Upper lobe of right lung (tissue), 1 donor: ENCODE measurements at regions of chr3 and their contacts with region 1.

Region 1: GRCh38 chr3:119891944-119892721 is 110.2 kb downstream of the NR1I2 start:
- DNase-seq: no peak
- ATAC-seq: peak; percentile 89
- H3K4me3 ChIP-seq: no peak overlapping the region
- H3K27ac ChIP-seq: no peak overlapping the region
- H3K4me1 ChIP-seq: no peaks in the 10 kb centered on the region
- H3K27me3 ChIP-seq: no peaks in the 10 kb centered on the region
- CTCF ChIP-seq: peak; percentile 71

Region 2: GRCh38 chr3:119794971-119795612 is 97.0 kb before region 1 on chr3:
- intact Hi-C with region 1: no loop called
- DNase-seq: no peak
- ATAC-seq: peak; percentile 52
- H3K4me3 ChIP-seq: no peak overlapping the region
- H3K27ac ChIP-seq: no peak overlapping the region
- H3K4me1 ChIP-seq: no peaks in the 10 kb centered on the region
- H3K27me3 ChIP-seq: no peaks in the 10 kb centered on the region
- CTCF ChIP-seq: no peak

Region 3: DNA sequence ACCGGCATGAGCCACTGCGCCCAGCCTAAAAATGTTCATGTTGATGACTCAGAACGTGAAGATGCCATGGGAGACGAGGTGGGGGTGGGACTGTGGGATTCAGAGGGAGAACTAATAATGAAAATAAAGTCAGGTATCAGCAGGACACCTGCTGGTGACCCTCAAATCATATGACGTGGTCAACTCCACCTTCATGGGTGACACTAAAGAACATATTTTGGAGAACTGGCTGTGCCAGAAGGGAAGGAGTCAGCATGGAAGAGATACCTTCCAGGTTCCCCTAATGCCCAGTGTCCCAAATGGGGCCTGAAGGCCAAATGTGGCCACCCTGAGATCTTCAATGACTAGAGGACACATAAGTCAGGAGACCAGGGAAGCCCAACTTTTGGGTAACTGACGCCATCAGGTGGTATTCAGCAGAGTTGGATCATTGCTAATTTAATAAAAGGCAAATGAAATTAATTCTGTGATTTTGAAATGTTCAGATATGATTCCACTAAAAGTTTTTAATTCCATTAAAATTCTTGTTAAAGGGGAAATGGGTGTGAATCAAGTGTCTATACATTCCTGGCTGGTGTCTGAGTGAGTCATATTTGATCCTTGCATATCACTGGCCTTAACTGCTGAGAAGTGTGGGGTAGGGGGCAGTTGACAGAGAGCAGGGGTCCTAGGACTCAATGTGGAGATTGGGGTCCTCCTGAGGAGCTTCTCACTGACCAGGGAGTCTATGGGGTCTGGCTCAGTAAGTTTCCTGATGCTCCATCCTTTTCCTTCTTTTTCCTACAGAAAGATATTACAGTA is 290.8 kb after region 1 on chr3:
- intact Hi-C with region 1: loop called (anchors 10 kb)
- DNase-seq: no peak
- ATAC-seq: peak; percentile 74
- H3K4me3 ChIP-seq: no peak overlapping the region
- H3K27ac ChIP-seq: no peak overlapping the region
- H3K4me1 ChIP-seq: peaks cover under 1% of the 10 kb centered on the region
- H3K27me3 ChIP-seq: no peaks in the 10 kb centered on the region
- CTCF ChIP-seq: peak; percentile 47